Head of caudate nucleus (tissue), 42 donors: ENCODE measurements at regions of chr16 and their contacts with region 1.

Region 1: DNA sequence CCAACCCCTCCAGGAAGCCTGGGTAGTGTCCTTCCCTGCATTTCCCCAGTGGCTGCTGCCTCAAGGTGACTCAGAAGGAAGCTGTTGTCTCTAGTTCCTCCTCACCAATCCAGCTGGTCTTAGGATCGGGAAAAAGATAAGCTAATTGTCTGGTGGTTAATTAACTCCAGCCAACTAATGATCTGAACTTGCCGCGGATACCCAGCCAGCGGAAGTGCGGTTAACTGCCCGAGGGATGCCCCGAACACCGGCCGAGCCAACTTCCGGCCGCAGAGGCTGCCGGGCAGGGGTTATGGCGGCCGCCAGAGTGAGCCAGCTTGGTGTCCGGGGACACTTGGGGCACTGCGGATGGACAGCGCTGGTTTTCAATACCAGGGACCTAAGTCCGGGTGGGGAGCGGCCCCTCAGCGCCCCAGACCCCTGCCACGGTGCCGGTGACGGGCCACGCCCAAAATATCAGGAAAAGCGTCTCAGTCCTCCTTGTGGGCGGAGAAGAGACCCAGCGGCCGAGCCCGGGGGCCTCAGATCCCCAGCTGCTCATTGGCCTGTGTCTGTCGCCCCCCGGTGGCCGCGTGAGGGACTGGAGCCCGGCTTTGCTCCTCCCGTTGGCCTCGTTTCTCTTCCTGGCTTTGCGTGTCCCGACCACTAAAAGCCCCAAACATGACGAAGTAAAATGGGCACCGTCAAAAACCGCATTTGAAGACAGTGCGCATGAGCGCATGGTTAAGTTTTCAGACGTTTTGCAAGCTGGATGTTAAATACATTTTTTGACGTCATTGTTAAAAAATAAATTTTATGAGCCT is 10.2 kb upstream of the PRSS22 start:
- DNase-seq: peak; percentile 88 to 98 (median 94)

Region 2: GRCh38 chr16:2194852-2195321 is 673.3 kb before region 1 on chr16:
- intact Hi-C with region 1: no loop called
- DNase-seq: peak in 3 of 42 donors; percentile 40 to 67 (median 66)

Region 3: DNA sequence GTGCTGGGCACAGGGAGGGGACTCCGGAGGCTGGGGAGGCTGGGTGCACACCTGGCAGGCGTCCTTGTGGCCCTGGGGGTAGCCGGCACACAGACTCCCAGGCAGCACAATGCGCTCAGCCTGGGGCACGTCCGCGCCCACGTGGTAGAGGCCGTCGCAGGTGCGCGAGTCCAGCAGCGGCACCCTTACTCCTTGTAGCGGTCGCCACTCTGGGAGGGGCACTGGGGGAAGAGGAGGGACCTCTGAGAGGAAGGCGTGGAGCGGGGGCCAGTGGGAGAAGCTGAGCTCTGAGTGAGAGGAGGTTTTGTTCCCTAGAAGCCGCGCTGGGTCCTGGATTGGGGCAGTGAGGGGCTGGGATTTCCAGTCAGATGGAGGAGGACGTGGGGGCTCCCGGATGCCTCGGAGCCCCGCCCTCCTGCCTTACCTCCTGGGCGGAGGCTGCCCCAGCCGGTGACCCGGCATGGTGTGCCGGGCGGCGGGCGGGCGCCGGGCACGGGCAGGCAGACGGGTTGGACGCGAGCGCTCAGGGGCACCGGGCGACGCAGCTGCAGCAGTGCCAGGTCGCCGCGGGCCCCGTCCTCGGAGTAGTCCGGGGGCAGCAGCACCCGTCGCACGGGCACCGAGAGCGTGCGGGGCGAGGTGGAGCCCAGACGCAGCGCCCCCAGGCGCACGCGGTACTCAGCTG is 83.1 kb before region 1 on chr16:
- intact Hi-C with region 1: loop called (anchors 10 kb)
- DNase-seq: peak in 5 of 42 donors; percentile 11 to 43 (median 22)